ENCODE measurements at regions of chr1 and their contacts with region 1.

Region 1: GRCh38 chr1:241007668-241008067 is 349.3 kb downstream of the RGS7 start:
- DNase-seq: no peak
- ATAC-seq: no peak
- H3K4me3 ChIP-seq: no peak overlapping the region
- H3K27ac ChIP-seq: no peak overlapping the region
- H3K4me1 ChIP-seq: no peaks in the 10 kb centered on the region
- H3K27me3 ChIP-seq: no peaks in the 10 kb centered on the region
- CTCF ChIP-seq: no peak
- EP300 ChIP-seq: no peak
- POLR2A ChIP-seq: no peak
- RAD21 ChIP-seq: no peak

Region 2: GRCh38 chr1:240765732-240766363 is 241.8 kb before region 1 on chr1:
- CTCF ChIA-PET with region 1: no interaction called
- POLR2A ChIA-PET with region 1: no interaction called
- RAD21 ChIA-PET with region 1: no interaction called
- SMC1A ChIA-PET with region 1: no interaction called
- in situ Hi-C with region 1: no loop called
- intact Hi-C with region 1: no loop called
- DNase-seq: no peak
- ATAC-seq: no peak
- H3K4me3 ChIP-seq: no peak overlapping the region
- H3K27ac ChIP-seq: no peak overlapping the region
- H3K4me1 ChIP-seq: no peaks in the 10 kb centered on the region
- H3K27me3 ChIP-seq: no peaks in the 10 kb centered on the region
- CTCF ChIP-seq: no peak
- EP300 ChIP-seq: no peak
- POLR2A ChIP-seq: no peak
- RAD21 ChIP-seq: no peak

Region 3: GRCh38 chr1:240889661-240890060 is 118.0 kb before region 1 on chr1:
- CTCF ChIA-PET with region 1: no interaction called
- POLR2A ChIA-PET with region 1: no interaction called
- RAD21 ChIA-PET with region 1: no interaction called
- SMC1A ChIA-PET with region 1: no interaction called
- in situ Hi-C with region 1: no loop called
- intact Hi-C with region 1: no loop called
- DNase-seq: no peak
- ATAC-seq: no peak
- H3K4me3 ChIP-seq: no peak overlapping the region
- H3K27ac ChIP-seq: no peak overlapping the region
- H3K4me1 ChIP-seq: no peaks in the 10 kb centered on the region
- H3K27me3 ChIP-seq: no peaks in the 10 kb centered on the region
- CTCF ChIP-seq: no peak
- EP300 ChIP-seq: no peak
- POLR2A ChIP-seq: no peak
- RAD21 ChIP-seq: no peak

Region 4: DNA sequence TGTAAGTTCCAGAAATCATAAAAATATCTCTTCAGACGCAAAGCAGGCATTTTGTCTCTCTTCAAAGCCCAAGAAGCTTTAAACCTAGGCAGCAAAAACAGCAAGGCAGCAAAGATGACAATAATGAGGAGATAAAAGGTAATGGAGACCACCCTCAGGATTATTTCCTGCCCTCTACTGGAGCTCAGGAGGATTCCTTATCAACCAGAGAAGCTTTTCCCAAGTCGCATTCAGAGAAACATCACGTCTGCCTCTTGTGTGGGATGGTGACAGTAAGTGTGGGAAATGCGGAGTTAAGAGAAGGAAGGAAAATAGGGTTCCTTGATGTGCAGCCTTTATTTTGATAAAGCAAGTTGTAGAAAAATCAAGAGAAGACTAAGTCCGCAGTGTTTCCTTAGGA is 16.4 kb before region 1 on chr1:
- CTCF ChIA-PET with region 1: no interaction called
- POLR2A ChIA-PET with region 1: no interaction called
- RAD21 ChIA-PET with region 1: no interaction called
- SMC1A ChIA-PET with region 1: no interaction called
- in situ Hi-C with region 1: no loop called
- intact Hi-C with region 1: no loop called
- DNase-seq: no peak
- ATAC-seq: no peak
- H3K4me3 ChIP-seq: no peak overlapping the region
- H3K27ac ChIP-seq: no peak overlapping the region
- H3K4me1 ChIP-seq: no peaks in the 10 kb centered on the region
- H3K27me3 ChIP-seq: no peaks in the 10 kb centered on the region
- CTCF ChIP-seq: no peak
- EP300 ChIP-seq: no peak
- POLR2A ChIP-seq: no peak
- RAD21 ChIP-seq: no peak

Region 5: DNA sequence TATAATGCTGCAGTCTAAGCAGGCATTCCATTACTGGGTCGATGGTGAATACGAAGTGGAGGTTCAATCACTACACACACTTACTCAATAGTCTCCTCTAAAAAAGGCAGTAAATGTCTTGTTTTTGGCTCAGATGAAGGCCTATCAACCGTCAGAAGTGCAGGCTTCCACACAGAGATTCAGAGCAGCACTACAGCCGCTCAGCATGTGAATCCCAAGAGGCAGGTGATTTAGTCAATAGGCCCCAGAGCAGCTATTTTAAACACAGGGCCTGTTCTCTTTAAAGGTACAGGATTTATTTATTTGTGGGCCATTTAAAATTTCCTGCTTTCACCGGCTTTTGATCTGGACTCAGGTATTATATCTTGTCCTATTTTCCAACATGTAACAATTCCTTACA is 55.6 kb after region 1 on chr1:
- CTCF ChIA-PET with region 1: no interaction called
- POLR2A ChIA-PET with region 1: no interaction called
- RAD21 ChIA-PET with region 1: no interaction called
- SMC1A ChIA-PET with region 1: no interaction called
- in situ Hi-C with region 1: no loop called
- intact Hi-C with region 1: loop called (anchors 1 kb)
- DNase-seq: no peak
- ATAC-seq: no peak
- H3K4me3 ChIP-seq: no peak overlapping the region
- H3K27ac ChIP-seq: no peak overlapping the region
- H3K4me1 ChIP-seq: no peaks in the 10 kb centered on the region
- H3K27me3 ChIP-seq: no peaks in the 10 kb centered on the region
- CTCF ChIP-seq: no peak
- EP300 ChIP-seq: no peak
- POLR2A ChIP-seq: no peak
- RAD21 ChIP-seq: no peak

Measured in GM12878 (cell line).